A673 (cell line): ENCODE measurements at regions of chr9 and their contacts with region 1.

Region 1: DNA sequence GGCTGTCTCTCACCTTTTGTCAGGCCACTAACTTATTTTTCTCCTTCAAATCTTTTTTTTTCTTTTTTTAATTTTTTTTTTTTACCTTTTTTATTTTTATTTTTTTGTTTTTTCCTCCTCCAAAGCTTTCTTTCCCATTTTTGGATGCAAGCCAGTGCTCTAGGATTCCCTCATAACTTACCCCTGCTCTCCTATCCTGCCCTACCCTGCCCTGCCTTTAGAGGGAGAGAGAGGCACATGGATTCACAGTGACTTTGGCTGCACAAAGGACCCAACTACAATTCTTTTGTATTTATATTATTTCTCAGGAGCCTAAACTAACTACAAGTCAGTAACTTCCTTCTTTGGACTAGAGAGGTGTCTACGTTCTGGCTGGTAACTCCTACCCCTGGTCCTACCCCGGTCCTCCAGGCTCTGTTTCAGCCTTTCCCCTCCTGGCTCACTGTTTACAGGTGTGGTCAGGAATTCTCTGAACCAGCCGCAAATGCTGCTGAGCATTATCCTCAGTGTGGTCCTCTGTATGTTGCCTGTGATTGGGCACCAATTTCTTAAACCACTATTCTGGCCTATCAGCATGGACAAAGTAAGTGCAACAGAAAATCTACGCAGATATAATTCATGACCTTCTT is 8.4 kb upstream of the RUSC2 start:
- DNase-seq: peak; percentile 73
- H3K4me3 ChIP-seq: no peak overlapping the region
- H3K27ac ChIP-seq: no peak overlapping the region
- H3K4me1 ChIP-seq: peaks cover under 1% of the 10 kb centered on the region
- H3K27me3 ChIP-seq: no peaks in the 10 kb centered on the region
- CTCF ChIP-seq: peak; percentile 70

Region 2: GRCh38 chr9:35258676-35259474 is 222.6 kb before region 1 on chr9:
- CTCF ChIA-PET with region 1: interaction called, 10 read pairs
- POLR2A ChIA-PET with region 1: no interaction called
- intact Hi-C with region 1: no loop called
- DNase-seq: peak; percentile 87
- H3K4me3 ChIP-seq: no peak overlapping the region
- H3K27ac ChIP-seq: no peak overlapping the region
- H3K4me1 ChIP-seq: no peaks in the 10 kb centered on the region
- H3K27me3 ChIP-seq: no peaks in the 10 kb centered on the region
- CTCF ChIP-seq: peak; percentile 79

Region 3: DNA sequence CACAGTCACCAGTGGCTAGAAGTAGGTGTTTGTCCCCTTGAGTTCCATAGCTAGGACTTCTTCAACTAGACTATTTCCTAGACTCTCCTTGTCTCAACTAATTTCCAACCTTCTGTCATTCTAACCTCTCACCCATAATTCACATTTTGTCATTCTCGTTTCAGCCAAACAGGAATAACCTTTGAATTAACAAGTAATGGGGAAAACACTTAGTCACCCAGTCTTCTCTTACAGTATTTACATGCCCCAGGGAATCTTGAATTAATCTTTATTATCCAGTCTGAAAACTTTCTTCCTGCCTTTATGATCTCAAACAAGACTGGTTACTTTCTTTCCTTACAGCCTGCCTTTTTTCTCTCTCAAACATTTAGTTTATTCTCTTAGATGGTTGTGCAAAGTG is 54.8 kb before region 1 on chr9:
- CTCF ChIA-PET with region 1: no interaction called
- POLR2A ChIA-PET with region 1: no interaction called
- intact Hi-C with region 1: loop called (anchors 5 kb)
- DNase-seq: peak; percentile 6
- H3K4me3 ChIP-seq: no peak overlapping the region
- H3K27ac ChIP-seq: no peak overlapping the region
- H3K4me1 ChIP-seq: no peaks in the 10 kb centered on the region
- H3K27me3 ChIP-seq: no peaks in the 10 kb centered on the region
- CTCF ChIP-seq: no peak